ENCODE measurements at regions of chr12 and their contacts with region 1.

Region 1: GRCh38 chr12:116582610-116583009 is 23.4 kb downstream of the MAP1LC3B2 start:
- DNase-seq: peak; percentile 68 to 81 (median 70)
- H3K4me3 ChIP-seq: no peak overlapping the region
- H3K27ac ChIP-seq: peak overlapping the region in 1 of 2 donors; percentile 29
- H3K4me1 ChIP-seq: peaks cover 6% of the 10 kb centered on the region
- H3K27me3 ChIP-seq: no peaks in the 10 kb centered on the region
- CTCF ChIP-seq: no peak
- EP300 ChIP-seq: no peak
- POLR2A ChIP-seq: no peak

Region 2: DNA sequence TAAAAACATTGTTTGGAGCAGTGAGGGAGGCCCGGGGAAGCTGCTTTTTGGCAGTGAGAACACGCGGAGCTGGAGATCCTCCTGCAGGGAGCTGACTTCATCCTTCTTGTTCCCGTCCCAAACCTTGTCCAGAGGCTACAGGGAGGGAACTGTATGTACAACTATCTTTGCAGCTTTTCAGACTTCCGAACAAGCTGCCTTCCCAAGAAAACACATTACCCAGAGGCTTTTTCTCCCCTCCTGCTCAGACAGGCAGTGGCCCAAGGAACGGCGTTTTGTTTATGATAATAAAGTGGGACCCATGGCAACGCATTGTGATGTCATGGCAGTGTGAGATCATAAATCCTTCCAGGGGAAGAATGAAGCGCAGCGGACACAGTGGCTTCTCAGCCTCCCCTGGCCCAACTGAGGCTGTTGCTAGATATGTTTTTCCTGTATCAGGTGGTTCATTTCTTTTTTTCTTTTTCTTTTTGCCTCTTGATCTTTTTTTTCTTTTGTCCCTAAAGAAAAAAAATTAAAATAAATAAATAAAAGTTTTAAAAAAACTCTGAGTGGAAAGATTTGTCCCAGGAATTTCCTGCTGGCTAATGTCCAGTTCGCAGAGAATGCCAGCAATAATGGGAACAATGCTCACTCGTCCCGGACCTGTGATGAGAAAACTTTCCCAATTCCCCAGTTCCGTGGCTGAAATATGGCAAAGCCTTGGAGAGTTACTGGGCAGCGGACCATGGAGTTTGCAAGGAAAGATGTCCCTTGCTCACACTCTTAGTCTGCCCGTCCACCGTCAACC is 126.9 kb before region 1 on chr12:
- intact Hi-C with region 1: loop called in 1 of 4 experiments (anchors 10 kb)
- DNase-seq: peak; percentile 82 to 93 (median 84)
- H3K4me3 ChIP-seq: no peak overlapping the region
- H3K27ac ChIP-seq: peak overlapping the region in 1 of 2 donors; percentile 70
- H3K4me1 ChIP-seq: peaks cover 8% of the 10 kb centered on the region
- H3K27me3 ChIP-seq: no peaks in the 10 kb centered on the region
- CTCF ChIP-seq: no peak
- EP300 ChIP-seq: peak; percentile 57
- POLR2A ChIP-seq: peak; percentile 50

Region 3: GRCh38 chr12:116539905-116540482 is 42.6 kb before region 1 on chr12:
- intact Hi-C with region 1: loop called in 1 of 4 experiments (anchors 5 kb)
- DNase-seq: peak in 4 of 5 donors; percentile 31 to 67 (median 55)
- H3K4me3 ChIP-seq: no peak overlapping the region
- H3K27ac ChIP-seq: no peak overlapping the region
- H3K4me1 ChIP-seq: peaks cover 8% of the 10 kb centered on the region
- H3K27me3 ChIP-seq: no peaks in the 10 kb centered on the region
- CTCF ChIP-seq: no peak
- EP300 ChIP-seq: no peak
- POLR2A ChIP-seq: no peak

Region 4: GRCh38 chr12:117084405-117085317 is 502.1 kb after region 1 on chr12:
- intact Hi-C with region 1: no loop called
- DNase-seq: peak; percentile 40 to 75 (median 54)
- H3K4me3 ChIP-seq: no peak overlapping the region
- H3K27ac ChIP-seq: no peak overlapping the region
- H3K4me1 ChIP-seq: no peaks in the 10 kb centered on the region
- H3K27me3 ChIP-seq: no peaks in the 10 kb centered on the region
- CTCF ChIP-seq: no peak
- EP300 ChIP-seq: no peak
- POLR2A ChIP-seq: no peak

Measured in ovary (tissue), 10 donors.